HepG2 (cell line): ENCODE measurements at regions of chr3 and their contacts with region 1.

Region 1: GRCh38 chr3:185270262-185270955 is 16.6 kb upstream of the EHHADH start:
- DNase-seq: peak; percentile 50
- ATAC-seq: peak; percentile 100
- H3K4me3 ChIP-seq: no peak overlapping the region
- H3K27ac ChIP-seq: no peak overlapping the region
- H3K4me1 ChIP-seq: peaks cover 21% of the 10 kb centered on the region
- H3K27me3 ChIP-seq: no peaks in the 10 kb centered on the region
- CTCF ChIP-seq: peak; percentile 89
- EP300 ChIP-seq: no peak
- POLR2A ChIP-seq: no peak
- RAD21 ChIP-seq: peak; percentile 67

Region 2: DNA sequence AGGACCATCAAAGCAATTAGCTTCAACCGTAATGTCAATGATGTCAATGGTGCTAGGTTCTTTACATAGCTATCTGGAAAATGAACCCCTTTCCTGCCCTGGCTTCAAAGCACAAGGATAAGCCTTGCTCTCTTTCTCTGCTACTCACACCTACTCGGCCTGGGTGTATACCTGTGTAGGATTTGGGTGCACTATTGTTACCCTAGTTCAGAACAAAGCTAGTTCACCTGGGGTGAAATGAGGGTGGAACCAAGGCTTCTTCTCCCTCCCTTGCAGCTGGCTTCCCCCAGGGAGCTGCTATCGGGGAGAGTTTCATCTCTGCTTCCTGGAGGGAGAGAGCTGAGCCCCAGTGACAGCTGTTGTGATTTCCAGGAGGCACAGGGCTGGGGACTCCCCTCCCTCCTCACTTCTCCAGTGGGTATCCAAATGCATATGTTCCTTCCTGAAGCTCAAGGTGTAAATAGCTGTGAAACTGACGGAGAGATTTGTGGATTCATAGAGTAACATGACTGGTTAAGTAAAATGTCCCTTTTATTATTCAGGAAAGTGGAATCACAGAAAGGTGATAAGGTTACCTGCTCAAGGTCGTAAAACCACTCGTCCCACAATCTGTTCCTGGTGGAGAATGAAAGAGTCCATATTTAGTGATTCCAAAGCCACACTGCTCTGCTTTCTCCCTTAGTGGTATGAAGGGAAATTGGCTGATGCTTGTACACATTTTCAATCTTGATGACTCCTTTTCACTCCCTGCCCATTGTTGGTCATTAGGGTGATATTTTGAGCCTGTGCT is 105.8 kb before region 1 on chr3:
- CTCF ChIA-PET with region 1: no interaction called
- POLR2A ChIA-PET with region 1: no interaction called
- in situ Hi-C with region 1: no loop called
- intact Hi-C with region 1: no loop called
- DNase-seq: no peak
- ATAC-seq: no peak; the same call in 2 of the 3 replicates
- H3K4me3 ChIP-seq: no peak overlapping the region
- H3K27ac ChIP-seq: no peak overlapping the region
- H3K4me1 ChIP-seq: peaks cover 19% of the 10 kb centered on the region; the same call in 1 of the 2 replicates
- H3K27me3 ChIP-seq: peaks cover 0 to 20% of the 10 kb centered on the region in 2 experiments; a peak in 3 of 5 replicates
- CTCF ChIP-seq: no peak
- EP300 ChIP-seq: no peak
- POLR2A ChIP-seq: no peak
- RAD21 ChIP-seq: no peak

Region 3: DNA sequence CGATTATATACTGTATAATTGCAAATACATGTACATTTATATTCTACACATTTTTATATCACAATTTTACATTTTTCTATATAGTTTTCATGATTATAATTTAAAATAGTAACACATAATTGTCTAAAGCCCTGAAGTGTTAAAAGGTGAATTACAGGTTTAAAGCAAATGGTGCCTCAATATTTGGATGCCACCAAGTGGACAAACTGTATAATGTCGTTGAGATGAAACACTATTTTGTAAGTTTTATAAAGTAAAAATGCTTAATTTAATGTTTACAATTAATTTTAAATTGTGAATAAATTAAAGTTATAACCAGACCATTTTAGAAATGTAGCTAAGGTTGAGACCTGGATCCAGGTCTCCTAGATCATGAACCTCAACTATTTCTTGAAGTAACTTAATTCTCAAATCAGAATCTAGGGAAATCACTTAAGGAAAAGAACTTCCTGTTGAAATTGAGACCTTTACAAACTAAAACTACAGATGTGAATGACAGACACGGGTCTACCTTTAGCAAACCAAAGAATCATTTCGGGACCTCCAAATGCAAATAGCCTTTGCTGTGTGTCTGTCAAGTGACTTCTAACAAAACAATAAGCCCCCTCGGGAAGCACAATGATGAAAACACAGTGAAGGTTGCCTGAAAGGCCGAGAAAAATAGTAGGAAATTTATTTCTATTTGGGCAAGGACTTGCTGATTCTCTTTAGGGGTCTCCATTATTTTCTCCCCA is 54.4 kb before region 1 on chr3:
- CTCF ChIA-PET with region 1: no interaction called
- POLR2A ChIA-PET with region 1: no interaction called
- in situ Hi-C with region 1: no loop called
- intact Hi-C with region 1: loop called (anchors 1 kb)
- DNase-seq: peak; percentile 14
- ATAC-seq: no peak
- H3K4me3 ChIP-seq: no peak overlapping the region
- H3K27ac ChIP-seq: peak overlapping the region; percentile 43
- H3K4me1 ChIP-seq: peaks cover 14% of the 10 kb centered on the region
- H3K27me3 ChIP-seq: no peaks in the 10 kb centered on the region
- CTCF ChIP-seq: peak; percentile 42
- EP300 ChIP-seq: no peak
- POLR2A ChIP-seq: no peak
- RAD21 ChIP-seq: no peak

Region 4: DNA sequence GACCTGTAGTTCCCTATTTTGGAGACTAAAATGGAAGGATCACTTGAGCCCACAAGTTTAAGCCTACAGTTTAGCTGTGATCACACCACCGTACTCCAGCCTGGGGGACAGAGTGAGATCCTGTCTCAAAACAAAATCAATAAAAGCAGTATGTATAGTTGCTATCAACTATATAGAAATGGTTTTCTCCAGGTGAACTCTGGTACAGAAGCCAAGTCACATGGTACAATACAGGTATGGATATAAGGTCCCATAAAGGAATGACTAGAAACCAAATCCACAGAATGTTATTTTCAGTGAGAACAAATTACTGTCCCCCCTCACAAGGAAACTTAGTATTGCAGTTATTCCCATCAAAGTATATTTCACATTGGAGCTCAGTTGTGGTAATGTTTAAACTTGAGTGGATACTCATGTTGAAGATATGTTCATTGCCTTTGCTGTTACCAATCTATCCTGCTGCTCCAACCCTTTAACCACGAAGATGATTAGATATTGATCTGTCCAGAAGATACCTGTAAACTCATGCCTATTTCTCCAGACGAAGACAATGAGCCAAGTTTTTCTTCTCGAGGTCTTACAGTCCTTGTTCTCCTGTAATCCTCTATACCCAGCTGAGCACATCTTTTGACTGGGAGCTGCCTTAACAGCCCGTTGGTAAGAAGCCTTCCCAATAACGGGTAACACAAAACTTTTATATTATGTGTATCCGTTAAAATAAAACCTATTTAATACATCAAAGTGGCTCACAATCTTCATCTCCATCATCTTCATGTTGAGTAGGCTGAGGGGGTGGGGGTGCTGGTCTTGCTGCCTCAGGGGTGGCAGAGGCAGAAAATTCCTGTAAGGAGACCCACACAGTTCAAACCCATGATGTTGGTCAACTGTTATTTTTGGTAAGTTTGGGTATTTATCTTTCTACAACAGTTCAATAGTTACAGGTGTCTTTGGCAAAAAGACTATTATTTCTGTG is 642.8 kb after region 1 on chr3:
- CTCF ChIA-PET with region 1: no interaction called
- POLR2A ChIA-PET with region 1: no interaction called
- in situ Hi-C with region 1: no loop called
- intact Hi-C with region 1: no loop called
- DNase-seq: no peak
- ATAC-seq: peak; percentile 0
- H3K4me3 ChIP-seq: no peak overlapping the region
- H3K27ac ChIP-seq: no peak overlapping the region
- H3K4me1 ChIP-seq: no peaks in the 10 kb centered on the region
- H3K27me3 ChIP-seq: no peaks in the 10 kb centered on the region
- CTCF ChIP-seq: no peak
- EP300 ChIP-seq: no peak
- POLR2A ChIP-seq: peak; percentile 15 to 49; a peak in 1 of 4 replicates
- RAD21 ChIP-seq: no peak